ENCODE measurements at regions of chr2 and their contacts with region 1.

Region 1: GRCh38 chr2:98731041-98731893 is at the start of gene MGAT4A:
- DNase-seq: peak; percentile 65 to 91 (median 76)
- ATAC-seq: peak; percentile 70
- H3K4me3 ChIP-seq: peak within 1 kb of the TSS; percentile 87
- H3K4me3 Mint-ChIP-seq: peak within 1 kb of the TSS; percentile 99
- H3K27ac ChIP-seq: peak within 1 kb of the TSS; percentile 77 to 91
- H3K27ac Mint-ChIP-seq: peak within 1 kb of the TSS; percentile 100
- H3K4me1 ChIP-seq: peaks cover 50% of the 10 kb centered on the region
- H3K4me1 Mint-ChIP-seq: peaks cover 80% of the 10 kb centered on the region
- H3K27me3 ChIP-seq: no peaks in the 10 kb centered on the region
- H3K27me3 Mint-ChIP-seq: peaks cover 4% of the 10 kb centered on the region
- CTCF ChIP-seq: no peak
- total RNA-seq, gene MGAT4A: 200 to 204 TPM

Region 2: DNA sequence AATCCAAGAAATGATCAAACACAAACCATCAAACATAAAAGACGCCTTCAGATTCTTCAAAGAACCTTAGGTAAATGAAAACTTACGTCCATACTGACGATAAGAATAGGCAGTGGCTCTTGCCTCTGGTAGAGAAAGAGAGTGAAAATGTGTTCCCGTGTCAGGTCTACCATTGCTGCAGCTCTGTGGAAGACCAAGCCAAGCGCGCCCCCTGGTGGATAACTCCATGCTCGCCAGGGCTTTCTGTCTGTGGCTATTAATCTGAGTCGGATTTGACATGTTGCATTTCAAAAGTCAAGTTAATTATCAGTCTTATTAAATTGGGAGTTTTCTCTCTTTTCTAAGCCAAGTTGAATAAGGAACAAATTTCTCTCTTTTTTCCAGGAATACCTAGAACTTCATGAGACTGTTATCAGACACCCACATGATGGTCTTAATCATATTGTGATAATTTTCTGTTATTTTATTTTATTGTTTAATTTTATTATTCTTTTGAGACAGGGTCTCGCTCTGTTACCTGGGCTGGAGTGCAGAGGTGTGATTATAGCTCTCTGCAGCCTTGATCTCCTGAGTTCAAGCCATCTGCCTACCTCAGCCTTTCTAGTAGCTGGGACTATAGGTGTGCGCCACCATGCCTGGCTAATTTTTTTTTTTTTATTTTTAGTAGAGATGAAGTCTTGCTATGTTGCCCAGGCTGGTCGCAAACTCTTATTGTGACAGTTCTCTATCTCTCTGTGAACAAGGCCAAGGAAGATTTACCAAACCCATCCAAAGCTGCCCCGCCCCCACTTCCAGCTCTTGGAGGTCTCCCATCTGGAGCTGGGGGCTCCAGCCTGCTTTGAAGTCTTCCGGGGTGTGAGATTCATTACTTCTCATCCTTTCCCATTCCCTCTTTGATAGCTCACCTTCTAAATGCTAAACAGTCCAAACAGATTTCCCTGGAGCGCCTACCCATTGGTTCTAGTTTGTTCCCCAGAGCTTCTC is 1033.7 kb before region 1 on chr2:
- CTCF ChIA-PET with region 1: no interaction called
- POLR2A ChIA-PET with region 1: no interaction called
- intact Hi-C with region 1: no loop called
- DNase-seq: peak; percentile 86 to 98 (median 94)
- ATAC-seq: peak; percentile 92
- H3K4me3 ChIP-seq: no peak overlapping the region
- H3K4me3 Mint-ChIP-seq: no peak overlapping the region
- H3K27ac ChIP-seq: no peak overlapping the region
- H3K27ac Mint-ChIP-seq: no peak overlapping the region
- H3K4me1 ChIP-seq: peaks cover 2% of the 10 kb centered on the region
- H3K4me1 Mint-ChIP-seq: peaks cover 11% of the 10 kb centered on the region
- H3K27me3 ChIP-seq: no peaks in the 10 kb centered on the region
- H3K27me3 Mint-ChIP-seq: peaks cover 4% of the 10 kb centered on the region
- CTCF ChIP-seq: peak; percentile 90

Region 3: GRCh38 chr2:98234776-98235175 is 496.5 kb before region 1 on chr2:
- CTCF ChIA-PET with region 1: no interaction called
- POLR2A ChIA-PET with region 1: no interaction called
- intact Hi-C with region 1: no loop called
- DNase-seq: no peak
- ATAC-seq: no peak
- H3K4me3 ChIP-seq: no peak overlapping the region
- H3K4me3 Mint-ChIP-seq: no peak overlapping the region
- H3K27ac ChIP-seq: no peak overlapping the region
- H3K27ac Mint-ChIP-seq: no peak overlapping the region
- H3K4me1 ChIP-seq: no peaks in the 10 kb centered on the region
- H3K4me1 Mint-ChIP-seq: no peaks in the 10 kb centered on the region
- H3K27me3 ChIP-seq: peaks cover 0 to 4% of the 10 kb centered on the region in 2 experiments
- H3K27me3 Mint-ChIP-seq: peaks cover 31% of the 10 kb centered on the region
- CTCF ChIP-seq: no peak

Region 4: GRCh38 chr2:98308068-98308467 is 423.2 kb before region 1 on chr2:
- CTCF ChIA-PET with region 1: no interaction called
- POLR2A ChIA-PET with region 1: no interaction called
- intact Hi-C with region 1: no loop called
- DNase-seq: no peak
- ATAC-seq: no peak
- H3K4me3 ChIP-seq: no peak overlapping the region
- H3K4me3 Mint-ChIP-seq: no peak overlapping the region
- H3K27ac ChIP-seq: no peak overlapping the region
- H3K27ac Mint-ChIP-seq: no peak overlapping the region
- H3K4me1 ChIP-seq: no peaks in the 10 kb centered on the region
- H3K4me1 Mint-ChIP-seq: no peaks in the 10 kb centered on the region
- H3K27me3 ChIP-seq: peaks cover 6 to 13% of the 10 kb centered on the region in 2 experiments
- H3K27me3 Mint-ChIP-seq: peaks cover 74% of the 10 kb centered on the region
- CTCF ChIP-seq: no peak

Region 5: DNA sequence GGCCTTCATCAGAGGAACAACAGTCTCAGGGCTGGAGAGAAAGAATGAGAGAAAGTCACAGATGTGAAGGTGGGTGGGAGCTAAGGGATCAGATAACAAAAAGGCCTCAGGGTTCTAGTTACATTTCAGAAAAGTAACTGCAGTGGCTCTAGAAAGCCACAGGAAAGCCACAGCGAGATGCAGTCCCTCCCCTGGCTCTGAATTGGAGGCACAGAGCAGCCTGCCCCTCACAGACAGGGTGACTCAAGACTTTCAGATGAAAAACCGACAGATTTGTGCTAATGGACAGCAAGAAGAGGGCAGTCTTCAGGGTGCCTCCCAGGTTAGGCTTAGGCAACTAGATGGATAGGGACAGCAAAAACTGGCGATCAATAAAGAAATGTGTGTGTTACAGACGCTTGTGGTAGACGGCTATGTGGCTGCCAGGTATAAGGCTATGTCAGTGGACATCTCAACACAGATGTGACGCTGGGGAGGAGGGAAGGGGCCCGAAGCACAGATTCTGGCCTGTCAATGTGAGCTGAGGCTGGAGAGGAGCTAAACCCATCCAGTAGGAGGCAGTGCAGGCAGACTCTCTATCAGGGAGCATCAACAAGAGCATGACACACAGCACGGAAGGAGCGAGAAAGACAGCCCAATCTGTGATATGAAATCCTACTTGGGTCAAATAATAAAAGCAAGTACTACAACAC is 96.7 kb before region 1 on chr2:
- CTCF ChIA-PET with region 1: interaction called, 10 read pairs
- POLR2A ChIA-PET with region 1: interaction called, 4 read pairs
- intact Hi-C with region 1: no loop called
- DNase-seq: peak in 10 of 14 experiments; percentile 28 to 76 (median 48)
- ATAC-seq: peak; percentile 60
- H3K4me3 ChIP-seq: no peak overlapping the region
- H3K4me3 Mint-ChIP-seq: no peak overlapping the region
- H3K27ac ChIP-seq: peak overlapping the region; percentile 9 to 25
- H3K27ac Mint-ChIP-seq: peak overlapping the region; percentile 83
- H3K4me1 ChIP-seq: peaks cover 31% of the 10 kb centered on the region
- H3K4me1 Mint-ChIP-seq: peaks cover 40% of the 10 kb centered on the region
- H3K27me3 ChIP-seq: no peaks in the 10 kb centered on the region
- H3K27me3 Mint-ChIP-seq: no peaks in the 10 kb centered on the region
- CTCF ChIP-seq: no peak

Region 6: GRCh38 chr2:98691303-98691702 is 40.0 kb before region 1 on chr2:
- CTCF ChIA-PET with region 1: interaction called, 10 read pairs
- POLR2A ChIA-PET with region 1: interaction called, 19 read pairs
- intact Hi-C with region 1: loop called in 1 of 2 experiments (anchors 5 kb)
- DNase-seq: peak in 4 of 14 experiments; percentile 14 to 30 (median 25)
- ATAC-seq: peak; percentile 72
- H3K4me3 ChIP-seq: no peak overlapping the region
- H3K4me3 Mint-ChIP-seq: no peak overlapping the region
- H3K27ac ChIP-seq: peak overlapping the region in 1 of 2 donors; percentile 30
- H3K27ac Mint-ChIP-seq: peak overlapping the region; percentile 92
- H3K4me1 ChIP-seq: peaks cover 65% of the 10 kb centered on the region
- H3K4me1 Mint-ChIP-seq: peaks cover 92% of the 10 kb centered on the region
- H3K27me3 ChIP-seq: no peaks in the 10 kb centered on the region
- H3K27me3 Mint-ChIP-seq: no peaks in the 10 kb centered on the region
- CTCF ChIP-seq: no peak

Region 7: GRCh38 chr2:98713332-98714015 is 17.8 kb before region 1 on chr2:
- CTCF ChIA-PET with region 1: interaction called, 8 read pairs
- POLR2A ChIA-PET with region 1: interaction called, 90 read pairs
- intact Hi-C with region 1: loop called in 1 of 2 experiments (anchors 2 kb)
- DNase-seq: no peak
- ATAC-seq: no peak
- H3K4me3 ChIP-seq: no peak overlapping the region
- H3K4me3 Mint-ChIP-seq: peak overlapping the region; percentile 62
- H3K27ac ChIP-seq: no peak overlapping the region
- H3K27ac Mint-ChIP-seq: peak overlapping the region; percentile 72
- H3K4me1 ChIP-seq: peaks cover 81% of the 10 kb centered on the region
- H3K4me1 Mint-ChIP-seq: peaks cover 96% of the 10 kb centered on the region
- H3K27me3 ChIP-seq: no peaks in the 10 kb centered on the region
- H3K27me3 Mint-ChIP-seq: no peaks in the 10 kb centered on the region
- CTCF ChIP-seq: no peak

Region 8: DNA sequence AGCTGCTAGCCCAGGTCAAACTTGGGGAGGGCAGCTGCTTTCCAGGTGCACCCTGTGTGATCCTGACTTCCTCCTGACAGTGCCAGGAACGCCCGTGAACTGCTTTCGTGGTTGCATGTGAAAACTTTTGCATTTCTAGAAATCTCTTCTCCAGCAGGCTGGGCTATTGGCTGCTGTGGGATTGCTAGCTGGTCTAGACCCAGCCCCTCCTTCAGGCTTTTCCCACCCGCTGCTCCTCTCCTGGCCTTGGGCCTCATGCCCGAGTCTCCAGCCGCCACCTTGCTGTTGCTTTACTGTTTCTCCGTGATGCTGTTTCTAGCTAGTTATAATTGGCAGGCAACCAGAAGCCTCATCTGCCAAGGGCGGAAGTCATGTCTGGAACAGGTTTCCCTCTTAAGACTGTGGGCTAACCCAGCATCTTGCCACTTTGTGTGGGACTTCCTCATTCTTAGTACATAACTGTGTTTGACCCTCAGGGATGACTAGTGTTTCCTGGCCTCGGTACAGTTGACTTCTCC is 26.7 kb after region 1 on chr2:
- CTCF ChIA-PET with region 1: interaction called, 8 read pairs
- POLR2A ChIA-PET with region 1: interaction called, 129 read pairs
- intact Hi-C with region 1: loop called in 1 of 2 experiments (anchors 2 kb)
- DNase-seq: peak in 13 of 14 experiments; percentile 41 to 89 (median 58)
- ATAC-seq: peak; percentile 78
- H3K4me3 ChIP-seq: peak overlapping the region; percentile 33
- H3K4me3 Mint-ChIP-seq: peak overlapping the region; percentile 75
- H3K27ac ChIP-seq: peak overlapping the region; percentile 73 to 75
- H3K27ac Mint-ChIP-seq: peak overlapping the region; percentile 94
- H3K4me1 ChIP-seq: peaks cover 68% of the 10 kb centered on the region
- H3K4me1 Mint-ChIP-seq: peaks cover 95% of the 10 kb centered on the region
- H3K27me3 ChIP-seq: no peaks in the 10 kb centered on the region
- H3K27me3 Mint-ChIP-seq: no peaks in the 10 kb centered on the region
- CTCF ChIP-seq: no peak

Region 9: DNA sequence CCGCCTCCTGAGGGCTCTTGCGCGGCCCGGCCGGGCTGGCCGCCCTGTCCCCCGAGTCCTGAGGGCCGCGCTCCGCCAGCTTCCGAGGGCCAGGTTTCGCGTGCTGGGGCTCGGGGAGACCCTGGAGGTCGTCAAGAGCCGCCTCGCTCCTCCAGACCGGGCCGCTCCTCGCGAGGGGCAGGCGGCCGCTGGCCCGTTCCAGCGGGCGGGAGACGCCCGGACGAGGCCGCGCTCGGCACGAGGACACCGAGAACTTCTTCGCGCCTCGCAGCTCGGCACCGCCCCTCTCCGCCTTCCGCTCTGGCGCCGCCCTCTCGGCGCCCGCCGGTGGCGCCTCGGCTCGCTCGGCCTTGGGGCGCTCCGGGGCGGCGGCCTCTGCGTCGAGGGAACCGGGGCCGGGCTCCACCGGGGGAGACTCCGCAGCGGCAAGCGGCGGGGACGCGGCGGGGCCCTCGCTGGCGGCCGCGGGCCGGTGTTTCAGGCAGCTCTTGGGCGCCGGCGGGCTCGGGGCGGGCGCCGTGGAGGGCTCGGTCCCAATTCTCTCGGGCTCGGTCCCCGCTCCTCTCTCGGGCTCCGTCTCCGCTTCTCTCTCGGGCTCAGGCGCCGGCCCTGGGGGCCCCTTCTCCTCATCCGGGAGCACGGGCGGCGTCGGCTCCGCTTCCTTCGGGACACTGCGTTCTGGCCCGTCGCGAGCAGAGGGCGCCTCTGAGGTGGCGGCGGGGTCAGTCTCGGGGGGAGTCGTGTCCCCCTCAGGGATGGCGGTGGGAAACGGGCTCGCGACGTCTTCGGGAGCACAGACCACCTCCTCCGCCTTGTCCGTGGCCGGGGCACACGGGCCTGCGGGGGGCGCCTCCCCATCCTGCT is 91.3 kb after region 1 on chr2:
- CTCF ChIA-PET with region 1: interaction called, 10 read pairs
- POLR2A ChIA-PET with region 1: interaction called, 9 read pairs
- intact Hi-C with region 1: loop called in 1 of 2 experiments (anchors 2 kb)
- DNase-seq: peak; percentile 33 to 87 (median 56)
- ATAC-seq: peak; percentile 91
- H3K4me3 ChIP-seq: peak overlapping the region; percentile 57
- H3K4me3 Mint-ChIP-seq: peak overlapping the region; percentile 62
- H3K27ac ChIP-seq: no peak overlapping the region
- H3K27ac Mint-ChIP-seq: no peak overlapping the region
- H3K4me1 ChIP-seq: peaks cover 29% of the 10 kb centered on the region
- H3K4me1 Mint-ChIP-seq: peaks cover 53% of the 10 kb centered on the region
- H3K27me3 ChIP-seq: no peaks in the 10 kb centered on the region
- H3K27me3 Mint-ChIP-seq: no peaks in the 10 kb centered on the region
- CTCF ChIP-seq: peak; percentile 43

Region 10: DNA sequence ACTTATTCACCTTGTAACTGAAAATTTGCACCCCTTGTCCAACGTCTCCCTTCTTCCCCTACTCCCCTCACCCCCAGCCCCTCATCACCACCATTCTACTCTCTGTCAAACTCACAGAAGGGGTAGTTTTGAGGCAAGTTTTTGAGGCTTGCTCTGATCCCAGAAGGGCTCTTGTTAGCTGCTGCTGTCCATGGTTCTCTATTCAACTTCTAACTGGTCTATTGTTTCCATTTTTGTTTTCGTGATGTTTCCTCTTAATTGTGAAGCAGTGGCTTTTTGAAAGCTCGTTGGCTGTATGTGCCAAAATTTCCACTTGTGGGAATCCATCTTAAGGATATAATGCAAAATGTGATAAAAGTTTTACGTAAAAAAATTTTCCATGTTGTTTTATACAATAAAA is 297.3 kb after region 1 on chr2:
- CTCF ChIA-PET with region 1: no interaction called
- POLR2A ChIA-PET with region 1: no interaction called
- intact Hi-C with region 1: no loop called
- DNase-seq: no peak
- ATAC-seq: no peak
- H3K4me3 ChIP-seq: no peak overlapping the region
- H3K4me3 Mint-ChIP-seq: no peak overlapping the region
- H3K27ac ChIP-seq: no peak overlapping the region
- H3K27ac Mint-ChIP-seq: no peak overlapping the region
- H3K4me1 ChIP-seq: no peaks in the 10 kb centered on the region
- H3K4me1 Mint-ChIP-seq: no peaks in the 10 kb centered on the region
- H3K27me3 ChIP-seq: no peaks in the 10 kb centered on the region
- H3K27me3 Mint-ChIP-seq: no peaks in the 10 kb centered on the region
- CTCF ChIP-seq: no peak

Measured in CD4-positive, alpha-beta T cell (primary cell).